ENCODE measurements at regions of chr14 and their contacts with region 1.

Region 1: DNA sequence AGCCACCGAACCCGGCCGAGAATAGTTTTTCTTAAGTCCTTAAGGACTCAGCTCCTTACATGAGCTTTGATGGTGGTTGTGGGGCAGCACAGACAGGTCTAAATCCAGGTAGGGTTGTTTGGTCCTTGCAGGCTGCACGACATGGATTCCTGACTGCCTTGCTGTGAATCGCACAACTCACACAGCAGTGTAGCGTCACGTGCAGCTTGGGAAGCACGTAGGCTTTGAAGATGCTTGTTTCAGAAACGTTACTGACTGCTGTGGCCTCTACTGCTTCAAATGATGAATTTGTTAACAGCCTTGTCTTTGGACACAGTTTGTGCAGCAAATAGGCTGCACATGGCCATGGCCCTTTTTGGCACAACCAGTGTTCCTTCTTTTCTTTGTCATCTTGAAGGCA is 29.9 kb downstream of the ZBTB42 start:
- DNase-seq: no peak
- ATAC-seq: no peak
- H3K4me3 ChIP-seq: no peak overlapping the region
- H3K27ac ChIP-seq: no peak overlapping the region
- H3K4me1 ChIP-seq: peaks cover 0 to 11% (median 4%) of the 10 kb centered on the region in 4 donors
- H3K27me3 ChIP-seq: no peaks in the 10 kb centered on the region
- CTCF ChIP-seq: no peak
- POLR2A ChIP-seq: no peak

Region 2: DNA sequence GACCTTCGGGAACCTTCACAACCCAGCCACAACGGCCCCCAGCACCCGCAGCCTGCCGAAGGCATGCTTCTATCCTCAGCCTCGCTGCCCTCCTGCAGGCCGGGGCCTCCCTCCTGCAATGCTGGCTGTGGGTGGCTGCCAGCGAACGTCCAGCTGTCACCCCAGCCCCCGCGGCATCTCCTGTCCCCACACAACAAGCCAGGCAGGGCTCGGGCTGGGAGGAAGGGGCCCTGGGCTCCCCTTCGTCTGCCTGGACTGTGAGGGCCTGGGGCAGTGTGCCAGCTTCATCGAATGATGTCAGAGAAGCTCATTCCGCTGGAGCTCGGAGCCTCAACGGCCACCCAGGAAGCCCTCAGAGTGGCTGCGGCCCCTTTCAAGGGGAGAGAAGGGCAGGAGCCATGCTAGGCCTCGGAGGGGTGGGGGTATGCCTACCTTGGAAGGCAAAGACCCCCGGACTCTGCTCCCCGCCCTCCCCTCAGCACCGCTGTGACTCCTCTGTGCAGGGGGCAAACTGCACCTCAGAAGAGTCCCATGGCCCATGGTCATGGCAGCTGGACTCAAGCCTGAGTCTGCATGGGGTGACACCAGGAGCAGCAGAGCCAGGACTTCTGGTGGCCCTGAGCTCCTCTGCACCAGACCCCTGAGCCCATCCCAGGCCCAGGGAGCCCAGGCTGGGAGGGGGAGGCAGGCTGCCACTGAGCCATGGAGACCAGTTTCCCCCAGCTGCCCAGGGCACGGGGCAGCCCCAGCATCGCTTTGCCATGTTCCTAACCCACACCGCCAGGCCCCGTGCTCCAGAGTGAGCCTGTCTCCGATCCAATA is 276.0 kb before region 1 on chr14:
- intact Hi-C with region 1: no loop called
- DNase-seq: peak; percentile 13 to 48 (median 44)
- ATAC-seq: no peak
- H3K4me3 ChIP-seq: no peak overlapping the region
- H3K27ac ChIP-seq: no peak overlapping the region
- H3K4me1 ChIP-seq: no peaks in the 10 kb centered on the region
- H3K27me3 ChIP-seq: no peaks in the 10 kb centered on the region
- CTCF ChIP-seq: no peak
- POLR2A ChIP-seq: no peak

Region 3: GRCh38 chr14:104865644-104866441 is 35.1 kb after region 1 on chr14:
- intact Hi-C with region 1: loop called in 1 of 2 experiments (anchors 5 kb)
- DNase-seq: peak; percentile 60 to 67 (median 66)
- ATAC-seq: peak; percentile 35 to 51 (median 44)
- H3K4me3 ChIP-seq: peak overlapping the region; percentile 57 to 79 (median 64)
- H3K27ac ChIP-seq: peak overlapping the region in 1 of 3 donors; percentile 33
- H3K4me1 ChIP-seq: peaks cover 0 to 8% (median 4%) of the 10 kb centered on the region in 4 donors
- H3K27me3 ChIP-seq: no peaks in the 10 kb centered on the region
- CTCF ChIP-seq: no peak
- POLR2A ChIP-seq: no peak

Region 4: GRCh38 chr14:104998801-104999200 is 168.0 kb after region 1 on chr14:
- intact Hi-C with region 1: no loop called
- DNase-seq: peak in 1 of 3 donors; percentile 26
- ATAC-seq: no peak
- H3K4me3 ChIP-seq: no peak overlapping the region
- H3K27ac ChIP-seq: no peak overlapping the region
- H3K4me1 ChIP-seq: no peaks in the 10 kb centered on the region
- H3K27me3 ChIP-seq: no peaks in the 10 kb centered on the region
- CTCF ChIP-seq: no peak
- POLR2A ChIP-seq: no peak

Measured in right lobe of liver (tissue), 6 donors.